GM10248 (cell line): ENCODE measurements at regions of chr1 and their contacts with region 1.

Region 1: DNA sequence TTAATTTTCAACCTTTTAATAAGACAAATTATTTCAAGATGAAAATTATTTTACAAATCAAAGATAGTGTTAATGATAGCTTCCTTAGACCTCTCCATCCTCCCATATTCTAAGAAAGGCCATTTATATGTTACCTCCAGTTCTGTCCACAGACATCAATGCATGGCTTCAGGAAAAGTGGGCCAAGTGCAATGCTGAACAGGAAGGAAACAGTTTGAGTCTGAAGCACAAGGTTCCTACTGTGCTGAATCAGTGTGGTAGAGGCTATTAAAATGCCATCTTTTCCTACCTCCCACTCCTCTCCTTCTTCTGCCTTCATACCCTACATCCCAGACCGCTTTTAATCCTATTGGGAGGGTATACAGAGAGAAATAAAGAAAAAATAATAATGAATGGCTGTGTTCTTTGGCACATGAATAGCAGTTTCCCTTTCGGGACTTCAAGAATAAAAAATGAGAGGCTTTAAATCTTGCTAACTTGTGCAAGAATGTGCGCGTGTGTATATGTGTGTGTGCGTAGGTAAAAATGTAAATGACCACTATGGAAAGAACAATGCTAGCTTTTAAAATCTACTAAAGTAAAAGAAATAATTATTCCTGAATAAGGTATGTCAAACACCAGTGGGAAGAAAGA is 62.6 kb upstream of the C1orf105 start:
- DNase-seq: no peak
- CTCF ChIP-seq: no peak

Region 2: DNA sequence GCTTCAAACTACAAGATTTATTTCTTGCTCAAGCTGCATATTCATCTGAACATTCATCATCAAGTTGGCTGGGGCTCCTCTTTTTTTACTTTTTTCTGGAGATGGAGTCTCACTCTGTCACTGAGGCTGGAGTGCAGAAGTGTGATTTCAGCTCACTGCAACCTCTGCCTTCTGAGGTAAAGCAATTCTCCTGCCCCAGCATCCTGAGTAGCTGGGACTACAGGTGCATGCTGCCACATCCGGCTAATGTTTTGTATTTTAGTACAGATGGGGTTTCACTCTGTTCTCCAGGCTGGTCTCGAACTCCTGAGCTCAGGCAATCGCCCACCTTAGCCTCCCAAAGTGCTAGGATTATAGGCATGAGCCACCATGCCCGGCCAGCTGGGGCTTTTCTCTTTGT is 25.6 kb before region 1 on chr1:
- CTCF ChIA-PET with region 1: no interaction called
- POLR2A ChIA-PET with region 1: no interaction called
- DNase-seq: no peak
- CTCF ChIP-seq: no peak

Region 3: DNA sequence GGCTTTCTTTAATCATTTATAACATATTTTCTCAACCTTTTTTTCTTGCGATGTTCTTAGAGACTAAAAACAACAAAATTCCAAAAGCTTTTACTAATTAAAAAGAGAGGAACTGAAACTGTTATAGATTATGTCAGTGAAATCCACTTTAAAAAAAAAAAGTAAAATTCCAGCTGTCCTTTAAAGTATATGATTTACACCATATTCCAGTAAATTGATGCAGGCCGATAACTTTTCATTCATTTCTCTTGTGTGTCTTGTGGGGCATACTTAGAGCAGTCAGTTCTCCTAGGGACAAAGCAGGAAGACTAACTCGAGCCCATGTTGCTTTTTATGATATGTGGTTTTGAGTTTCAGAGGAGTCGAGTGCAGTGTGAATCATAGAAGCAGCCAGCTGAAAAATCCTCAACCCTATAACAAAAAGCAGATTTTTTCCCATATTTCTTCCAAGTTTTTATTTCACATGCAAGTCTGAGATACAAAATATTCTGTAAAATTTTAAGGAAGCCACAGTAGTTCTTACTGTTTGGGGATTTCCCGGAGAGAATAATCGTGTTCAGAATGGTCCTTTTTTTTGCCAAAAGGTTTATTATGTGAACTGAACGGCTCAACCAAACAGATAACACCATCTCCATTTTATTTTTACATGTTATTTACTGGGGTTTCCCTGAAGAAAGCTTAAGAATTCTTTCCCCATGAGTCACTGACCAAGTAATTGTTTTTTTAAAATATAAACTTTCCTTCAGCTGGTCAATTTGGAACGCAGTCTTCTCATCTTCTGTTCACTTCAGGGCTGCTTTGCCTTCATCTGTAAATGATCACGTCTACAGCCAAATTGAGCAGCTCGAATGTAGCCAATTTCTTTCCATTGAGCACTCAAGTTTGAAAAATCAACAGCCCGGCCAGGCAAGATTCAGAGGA is 14.4 kb before region 1 on chr1:
- CTCF ChIA-PET with region 1: interaction called, 14 read pairs
- POLR2A ChIA-PET with region 1: no interaction called
- DNase-seq: no peak
- CTCF ChIP-seq: no peak

Region 4: DNA sequence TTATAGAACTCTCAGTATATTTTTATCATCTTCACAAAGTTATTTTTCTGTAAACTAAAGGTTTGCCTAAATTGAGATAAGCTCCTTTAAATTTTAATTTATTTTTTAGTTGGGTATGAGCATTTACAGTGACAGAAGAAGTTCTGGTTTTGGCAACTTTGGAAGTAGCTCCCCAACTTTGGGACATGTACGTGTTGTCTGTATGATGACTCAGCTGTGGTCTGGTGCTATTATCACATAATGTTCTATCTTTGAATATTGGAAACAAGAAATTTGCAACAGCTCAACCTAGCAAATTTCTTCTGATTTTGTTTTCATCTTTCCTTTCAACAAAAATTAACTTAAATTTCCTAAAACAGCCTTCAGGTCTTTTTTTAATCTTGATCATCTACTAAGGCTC is 16.0 kb after region 1 on chr1:
- CTCF ChIA-PET with region 1: interaction called, 35 read pairs
- POLR2A ChIA-PET with region 1: no interaction called
- DNase-seq: no peak
- CTCF ChIP-seq: no peak

Region 5: GRCh38 chr1:172662464-172663109 is 304.7 kb after region 1 on chr1:
- CTCF ChIA-PET with region 1: no interaction called
- POLR2A ChIA-PET with region 1: no interaction called
- DNase-seq: peak; percentile 57
- CTCF ChIP-seq: no peak